ENCODE measurements at regions of chr6 and their contacts with region 1.

Region 1: GRCh38 chr6:7389451-7390225 is at the starts of genes CAGE1 and RIOK1:
- DNase-seq: peak; percentile 99
- total RNA-seq, gene CAGE1: not detected
- total RNA-seq, gene RIOK1: 18.9 to 20.7 TPM

Region 2: GRCh38 chr6:7300926-7301325 is 88.7 kb before region 1 on chr6:
- intact Hi-C with region 1: loop called in 1 of 2 experiments (anchors 10 kb)
- DNase-seq: no peak

Region 3: DNA sequence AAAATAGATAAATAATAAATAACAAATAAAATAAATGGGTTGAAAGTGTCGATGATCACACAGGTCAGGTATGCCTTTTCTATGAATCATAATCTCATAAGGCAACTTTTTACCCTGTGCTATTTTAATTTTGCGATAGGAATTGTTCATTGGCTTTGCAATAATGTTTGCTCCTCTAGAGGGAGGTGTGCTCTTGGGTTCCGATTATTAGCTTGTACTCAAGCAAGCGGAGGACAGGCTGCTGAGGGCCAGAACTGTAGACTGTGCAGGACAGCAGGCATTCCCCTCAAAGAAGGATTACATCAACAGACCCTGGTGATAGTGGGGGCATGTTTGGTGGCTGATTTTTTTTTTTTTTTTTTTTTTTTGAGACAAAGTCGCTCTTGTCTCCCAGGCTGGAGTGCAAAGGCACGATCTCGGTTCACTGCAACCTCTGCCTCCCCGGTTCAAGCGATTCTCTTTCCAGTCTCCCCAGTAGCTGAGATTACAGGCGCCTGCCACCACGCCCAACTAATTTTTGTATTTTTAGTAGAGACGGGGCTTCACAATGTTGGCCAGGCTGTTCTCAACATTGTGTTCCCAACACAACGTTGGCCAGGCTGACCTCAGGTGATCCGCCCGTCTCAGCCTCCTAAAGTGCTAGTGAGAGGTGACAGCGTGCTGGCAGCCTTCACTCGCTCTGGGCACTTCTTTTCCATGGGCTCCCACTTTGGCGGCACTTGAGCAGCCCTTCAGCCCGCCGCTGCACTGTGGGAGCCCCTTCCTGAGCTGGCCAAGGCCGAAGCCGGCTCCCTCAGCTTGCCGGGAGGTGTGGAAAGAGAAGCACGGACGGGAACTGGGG is 35.5 kb after region 1 on chr6:
- intact Hi-C with region 1: no loop called
- DNase-seq: no peak

Region 4: DNA sequence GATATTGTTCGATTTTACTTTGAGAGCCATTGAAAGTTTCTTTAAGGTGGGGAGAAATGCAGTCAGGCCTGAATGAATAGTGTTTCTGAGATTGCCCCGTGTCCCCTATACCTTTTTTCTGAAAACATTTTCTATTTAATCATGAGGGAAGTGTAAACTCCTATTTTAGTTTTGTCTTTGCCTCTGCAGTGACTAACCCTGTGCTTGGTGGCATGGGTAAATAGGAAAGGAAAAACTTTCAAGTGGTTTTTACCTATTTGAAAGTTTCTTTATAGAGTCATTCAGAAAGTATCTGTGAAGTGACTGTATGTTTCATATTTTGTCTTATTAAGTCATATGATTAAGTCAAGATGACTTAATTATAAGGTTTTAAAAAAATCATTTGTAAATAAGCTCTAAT is 214.9 kb after region 1 on chr6:
- intact Hi-C with region 1: loop called in 1 of 2 experiments (anchors 5 kb)
- DNase-seq: no peak

Measured in posterior vena cava (tissue), 2 donors.